Activated naive CD4-positive, alpha-beta T cell treated with anti-CD3 and anti-CD28 coated beads for 36 hours (primary cell): ENCODE measurements at regions of chr10 and their contacts with region 1.

Region 1: DNA sequence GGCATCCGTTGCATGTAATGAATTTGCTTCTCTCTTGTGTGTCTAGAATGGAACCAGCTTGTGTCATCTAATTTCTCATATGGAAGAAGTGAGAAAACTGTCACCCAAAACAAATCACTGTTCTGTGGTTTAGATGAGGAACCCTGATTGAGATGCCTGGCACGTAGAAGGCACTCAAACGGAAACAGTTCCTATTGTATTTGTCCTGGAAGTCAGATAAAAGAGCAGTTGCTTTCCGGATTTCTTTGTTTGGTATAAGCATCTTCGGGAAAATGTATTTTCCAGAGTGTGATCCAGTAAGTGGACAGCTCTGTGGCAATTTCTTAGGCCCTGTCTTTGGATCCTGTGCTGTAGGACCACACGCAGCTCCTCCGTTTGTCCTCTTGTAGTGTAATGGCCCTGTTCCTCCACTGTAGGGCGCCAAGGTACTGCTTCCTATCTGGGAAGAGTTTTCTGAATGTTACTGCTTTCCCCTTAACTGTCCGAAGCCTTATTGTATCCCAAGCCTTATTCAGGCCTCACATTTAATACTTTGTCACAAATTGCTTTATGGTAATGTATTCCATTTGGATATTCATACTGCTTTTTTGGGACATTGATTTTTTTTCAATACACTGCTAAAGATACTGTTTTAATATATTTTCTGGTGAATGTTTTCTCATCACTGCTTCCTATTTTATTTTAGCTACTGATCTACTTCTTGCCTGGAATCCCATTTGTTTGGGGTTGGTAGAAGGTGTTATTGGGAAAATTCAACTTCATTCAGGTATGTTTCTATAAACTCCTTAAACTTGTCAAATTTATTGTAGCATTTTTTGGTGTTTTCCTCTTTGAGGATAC is 24.8 kb downstream of the INPP5F start:
- DNase-seq: peak; percentile 82
- H3K4me3 Mint-ChIP-seq: no peak overlapping the region
- H3K27ac Mint-ChIP-seq: no peak overlapping the region
- H3K4me1 Mint-ChIP-seq: peaks cover 11% of the 10 kb centered on the region
- H3K27me3 Mint-ChIP-seq: no peaks in the 10 kb centered on the region

Region 2: GRCh38 chr10:119737827-119738226 is 12.8 kb before region 1 on chr10:
- CTCF ChIA-PET with region 1: interaction called, 9 read pairs
- intact Hi-C with region 1: loop called (anchors 2 kb)
- DNase-seq: peak; percentile 39
- H3K4me3 Mint-ChIP-seq: no peak overlapping the region
- H3K27ac Mint-ChIP-seq: peak overlapping the region; percentile 59
- H3K4me1 Mint-ChIP-seq: peaks cover 50% of the 10 kb centered on the region
- H3K27me3 Mint-ChIP-seq: no peaks in the 10 kb centered on the region

Region 3: GRCh38 chr10:119859420-119860258 is 109.0 kb after region 1 on chr10:
- CTCF ChIA-PET with region 1: interaction called, 28 read pairs
- intact Hi-C with region 1: loop called (anchors 1 kb)
- DNase-seq: no peak
- H3K4me3 Mint-ChIP-seq: no peak overlapping the region
- H3K27ac Mint-ChIP-seq: no peak overlapping the region
- H3K4me1 Mint-ChIP-seq: peaks cover 43% of the 10 kb centered on the region
- H3K27me3 Mint-ChIP-seq: no peaks in the 10 kb centered on the region

Region 4: GRCh38 chr10:119919826-119920225 is 169.2 kb after region 1 on chr10:
- CTCF ChIA-PET with region 1: interaction called, 3 read pairs
- intact Hi-C with region 1: loop called (anchors 1 kb)
- DNase-seq: no peak
- H3K4me3 Mint-ChIP-seq: no peak overlapping the region
- H3K27ac Mint-ChIP-seq: peak overlapping the region; percentile 42
- H3K4me1 Mint-ChIP-seq: peaks cover 13% of the 10 kb centered on the region
- H3K27me3 Mint-ChIP-seq: no peaks in the 10 kb centered on the region